Transverse colon (tissue), 4 donors: ENCODE measurements at regions of chr17 and their contacts with region 1.

Region 1: GRCh38 chr17:64183815-64184214 is 53.9 kb upstream of the ERN1 start:
- DNase-seq: no peak
- H3K4me3 ChIP-seq: no peak overlapping the region
- H3K27ac ChIP-seq: no peak overlapping the region
- H3K4me1 ChIP-seq: peaks cover 0 to 3% (median 1%) of the 10 kb centered on the region in 4 donors
- H3K27me3 ChIP-seq: no peaks in the 10 kb centered on the region
- CTCF ChIP-seq: no peak
- EP300 ChIP-seq: no peak
- POLR2A ChIP-seq: no peak

Region 2: GRCh38 chr17:64240741-64241347 is 57.0 kb after region 1 on chr17:
- in situ Hi-C with region 1: no loop called
- intact Hi-C with region 1: loop called (anchors 10 kb)
- DNase-seq: peak; percentile 35
- H3K4me3 ChIP-seq: no peak overlapping the region
- H3K27ac ChIP-seq: peak overlapping the region; percentile 55 to 75 (median 65)
- H3K4me1 ChIP-seq: peaks cover 0 to 20% (median 17%) of the 10 kb centered on the region in 4 donors
- H3K27me3 ChIP-seq: no peaks in the 10 kb centered on the region
- CTCF ChIP-seq: no peak
- EP300 ChIP-seq: no peak
- POLR2A ChIP-seq: no peak